Naive thymus-derived CD4-positive, alpha-beta T cell (primary cell): ENCODE measurements at regions of chr2 and their contacts with region 1.

Region 1: GRCh38 chr2:100818606-100819369 is 1.2 kb upstream of the NPAS2 start:
- DNase-seq: peak in 6 of 9 donors; percentile 3 to 28 (median 18)
- ATAC-seq: peak; percentile 33
- H3K4me3 ChIP-seq: peak overlapping the region; percentile 48
- H3K4me3 Mint-ChIP-seq: peak overlapping the region; percentile 72 to 91 (median 82)
- H3K27ac ChIP-seq: no peak overlapping the region
- H3K27ac Mint-ChIP-seq: peak overlapping the region in 5 of 9 donors; percentile 29 to 84 (median 36)
- H3K4me1 ChIP-seq: peaks cover 0 to 22% of the 10 kb centered on the region in 2 donors
- H3K4me1 Mint-ChIP-seq: peaks cover 16 to 64% (median 37%) of the 10 kb centered on the region in 7 donors
- H3K27me3 ChIP-seq: no peaks in the 10 kb centered on the region
- H3K27me3 Mint-ChIP-seq: peaks cover 0 to 55% (median 33%) of the 10 kb centered on the region in 5 donors

Region 2: DNA sequence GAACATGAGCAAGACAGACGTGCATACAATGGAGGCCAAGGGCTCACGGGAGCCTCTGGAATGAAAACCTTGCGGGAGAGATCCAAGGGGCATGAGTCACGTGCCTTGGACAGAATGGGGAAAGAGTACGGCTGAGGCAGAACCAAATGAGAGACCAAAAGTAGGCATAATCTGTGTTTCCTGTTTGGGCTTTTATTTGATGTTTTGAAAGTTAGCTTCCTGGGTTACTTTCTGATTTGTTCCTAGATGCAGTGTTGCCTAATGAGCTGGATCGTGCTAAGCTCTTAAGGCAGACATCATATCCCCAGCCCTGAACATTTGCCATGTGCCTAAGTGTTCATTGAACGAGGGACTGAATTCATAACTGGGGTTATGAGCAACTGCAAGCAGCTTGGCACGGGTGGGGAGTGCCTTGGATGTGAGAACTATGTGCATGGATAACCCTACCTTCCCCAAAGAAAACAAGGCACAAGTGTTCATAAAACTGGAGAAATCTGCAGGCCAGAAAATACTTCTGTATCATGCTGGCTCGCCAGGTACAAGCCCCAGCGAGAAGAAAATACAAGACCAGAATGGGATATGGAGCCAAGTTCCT is 123.0 kb after region 1 on chr2:
- CTCF ChIA-PET with region 1: no interaction called
- POLR2A ChIA-PET with region 1: no interaction called
- intact Hi-C with region 1: loop called in 1 of 2 experiments (anchors 10 kb)
- DNase-seq: peak in 6 of 9 donors; percentile 7 to 41 (median 31)
- ATAC-seq: peak; percentile 36
- H3K4me3 ChIP-seq: peak overlapping the region; percentile 49
- H3K4me3 Mint-ChIP-seq: peak overlapping the region; percentile 27 to 87 (median 76)
- H3K27ac ChIP-seq: peak overlapping the region; percentile 54
- H3K27ac Mint-ChIP-seq: peak overlapping the region; percentile 76 to 96 (median 92)
- H3K4me1 ChIP-seq: peaks cover 4 to 29% of the 10 kb centered on the region in 2 donors
- H3K4me1 Mint-ChIP-seq: peaks cover 25 to 61% (median 55%) of the 10 kb centered on the region in 7 donors
- H3K27me3 ChIP-seq: no peaks in the 10 kb centered on the region
- H3K27me3 Mint-ChIP-seq: peaks cover 0 to 13% (median 3%) of the 10 kb centered on the region in 5 donors